Psoas muscle (tissue), 8 donors: ENCODE measurements at regions of chr22 and their contacts with region 1.

Region 1: GRCh38 chr22:28442264-28442710 is 237.4 kb downstream of the TTC28 start:
- DNase-seq: peak; percentile 74 to 87
- ATAC-seq: peak; percentile 90 to 93 (median 92)
- H3K4me3 ChIP-seq: peak overlapping the region; percentile 79
- H3K27ac ChIP-seq: peak overlapping the region; percentile 79
- H3K4me1 ChIP-seq: peaks cover 61% of the 10 kb centered on the region
- H3K27me3 ChIP-seq: no peaks in the 10 kb centered on the region
- CTCF ChIP-seq: peak; percentile 67

Region 2: GRCh38 chr22:28019881-28020871 is 422.1 kb before region 1 on chr22:
- intact Hi-C with region 1: loop called (anchors 5 kb)
- DNase-seq: peak; percentile 82 to 90
- ATAC-seq: peak; percentile 71 to 82 (median 73)
- H3K4me3 ChIP-seq: no peak overlapping the region
- H3K27ac ChIP-seq: peak overlapping the region; percentile 91
- H3K4me1 ChIP-seq: peaks cover 48% of the 10 kb centered on the region
- H3K27me3 ChIP-seq: no peaks in the 10 kb centered on the region
- CTCF ChIP-seq: peak; percentile 97

Region 3: DNA sequence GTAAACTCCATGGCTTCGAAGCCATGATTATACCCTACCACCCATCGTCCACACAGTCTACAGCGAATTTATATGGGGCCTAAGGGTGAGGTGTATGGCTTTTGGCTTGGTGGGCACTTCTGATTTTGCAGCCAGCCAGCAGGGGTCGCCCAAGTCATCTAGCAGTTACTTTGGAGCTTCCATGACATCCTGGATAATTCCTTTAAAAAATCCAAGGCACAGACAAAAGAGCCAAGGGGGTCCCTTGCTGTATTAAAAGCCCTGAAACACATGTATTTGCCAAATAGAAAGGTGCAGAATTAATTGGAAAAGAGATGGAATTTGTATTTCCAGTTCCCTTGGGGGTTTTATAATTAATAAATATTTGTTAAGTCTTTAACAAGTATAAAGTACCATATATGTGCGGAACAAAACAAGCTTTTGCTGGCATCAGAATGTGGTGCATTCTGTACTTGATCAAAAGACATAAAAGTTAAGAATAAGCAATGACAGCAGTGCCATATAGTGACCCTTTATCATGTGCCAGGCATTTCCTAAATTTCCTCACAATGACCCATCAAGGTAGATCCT is 390.4 kb before region 1 on chr22:
- intact Hi-C with region 1: loop called (anchors 5 to 10 kb)
- DNase-seq: peak; percentile 72 to 88
- ATAC-seq: peak; percentile 67 to 84 (median 76)
- H3K4me3 ChIP-seq: no peak overlapping the region
- H3K27ac ChIP-seq: no peak overlapping the region
- H3K4me1 ChIP-seq: no peaks in the 10 kb centered on the region
- H3K27me3 ChIP-seq: no peaks in the 10 kb centered on the region
- CTCF ChIP-seq: peak; percentile 92

Region 4: DNA sequence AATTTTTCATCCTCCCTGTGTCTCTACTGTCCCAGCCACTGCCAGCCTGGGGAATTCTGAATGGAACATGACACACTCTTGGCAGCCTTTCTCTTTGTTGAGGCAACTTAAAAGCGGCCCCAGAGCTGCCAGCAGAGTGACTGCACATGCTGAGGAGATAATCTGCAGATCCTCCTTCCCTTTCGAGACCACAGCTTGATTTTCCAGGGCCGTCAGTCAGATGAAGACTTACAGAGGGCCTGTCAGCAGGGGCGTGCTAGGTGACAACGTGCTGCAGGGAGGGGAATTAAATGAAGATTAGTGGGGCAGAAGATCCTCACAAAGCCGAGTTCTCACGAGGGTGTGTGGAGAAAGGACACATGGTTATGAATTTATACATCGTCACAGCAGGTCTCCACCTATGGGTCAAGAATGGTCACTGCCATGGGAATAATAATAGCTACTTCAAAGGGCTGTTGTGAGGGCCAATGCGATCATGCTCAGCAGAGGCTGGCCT is 329.7 kb before region 1 on chr22:
- intact Hi-C with region 1: loop called in 1 of 2 experiments (anchors 10 kb)
- DNase-seq: peak; percentile 59 to 80
- ATAC-seq: peak; percentile 77 to 95 (median 88)
- H3K4me3 ChIP-seq: peak overlapping the region; percentile 27
- H3K27ac ChIP-seq: peak overlapping the region; percentile 62
- H3K4me1 ChIP-seq: peaks cover 18% of the 10 kb centered on the region
- H3K27me3 ChIP-seq: no peaks in the 10 kb centered on the region
- CTCF ChIP-seq: peak; percentile 55

Region 5: DNA sequence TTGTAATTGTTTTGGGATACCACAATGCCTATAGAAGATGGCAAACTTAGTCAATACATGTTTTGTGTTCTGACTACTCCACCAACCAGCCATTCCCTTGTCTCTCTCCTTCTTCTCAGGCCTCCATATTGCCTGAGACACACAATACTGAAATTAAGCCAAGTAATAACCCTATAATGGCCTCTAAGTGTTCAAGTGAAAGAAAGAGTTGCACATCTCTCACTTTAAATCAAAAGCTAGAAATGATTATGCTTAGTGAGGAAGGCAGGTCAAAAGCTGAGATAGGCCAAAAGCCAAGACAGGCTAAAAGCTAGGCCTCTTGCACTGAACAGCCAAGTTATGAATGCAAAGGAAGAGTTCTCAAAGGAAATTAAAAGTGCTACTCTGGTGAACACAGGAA is 81.3 kb before region 1 on chr22:
- intact Hi-C with region 1: loop called in 1 of 2 experiments (anchors 5 kb)
- DNase-seq: no peak
- ATAC-seq: no peak
- H3K4me3 ChIP-seq: no peak overlapping the region
- H3K27ac ChIP-seq: no peak overlapping the region
- H3K4me1 ChIP-seq: peaks cover 16% of the 10 kb centered on the region
- H3K27me3 ChIP-seq: no peaks in the 10 kb centered on the region
- CTCF ChIP-seq: no peak

Region 6: GRCh38 chr22:28395920-28396753 is 46.1 kb before region 1 on chr22:
- intact Hi-C with region 1: no loop called
- DNase-seq: no peak
- ATAC-seq: peak in 1 of 4 donors; percentile 25
- H3K4me3 ChIP-seq: no peak overlapping the region
- H3K27ac ChIP-seq: no peak overlapping the region
- H3K4me1 ChIP-seq: peaks cover 8% of the 10 kb centered on the region
- H3K27me3 ChIP-seq: no peaks in the 10 kb centered on the region
- CTCF ChIP-seq: no peak

Region 7: DNA sequence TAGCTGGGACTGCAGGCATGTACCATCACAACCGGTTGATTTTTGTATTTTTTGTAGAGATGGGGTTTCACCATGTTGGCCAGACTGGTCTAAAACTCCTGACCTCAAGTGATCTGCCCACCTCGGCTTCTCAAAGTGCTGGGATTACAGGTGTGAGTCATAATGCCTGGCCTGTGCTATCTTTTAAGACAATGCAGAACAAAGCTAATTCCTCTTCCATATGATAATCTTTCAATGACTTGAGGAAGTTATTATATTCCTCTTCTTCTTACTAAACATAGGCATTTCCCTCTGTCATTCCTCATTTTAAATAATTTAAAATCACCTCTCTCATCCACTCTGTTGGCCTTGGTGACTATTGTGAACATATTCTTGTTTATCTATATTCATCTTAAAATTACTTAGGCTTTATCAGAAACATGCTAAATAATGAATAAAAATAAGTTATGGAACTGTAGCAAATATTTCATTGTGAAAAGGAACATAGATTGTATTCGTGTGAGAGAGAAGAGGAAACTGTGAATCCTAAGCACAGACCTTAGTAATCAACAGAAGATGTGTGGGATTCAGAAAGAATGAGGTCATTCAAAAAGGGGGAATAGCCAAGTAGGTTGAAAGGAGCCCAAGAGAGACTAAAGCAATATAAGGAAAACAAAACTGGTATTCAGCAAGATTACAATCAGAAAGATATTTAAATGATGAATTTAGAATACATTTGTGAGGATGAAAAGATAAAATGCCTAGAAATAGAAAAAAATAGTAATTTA is 32.1 kb before region 1 on chr22:
- intact Hi-C with region 1: no loop called
- DNase-seq: no peak
- ATAC-seq: no peak
- H3K4me3 ChIP-seq: no peak overlapping the region
- H3K27ac ChIP-seq: no peak overlapping the region
- H3K4me1 ChIP-seq: peaks cover 39% of the 10 kb centered on the region
- H3K27me3 ChIP-seq: no peaks in the 10 kb centered on the region
- CTCF ChIP-seq: no peak

Region 8: DNA sequence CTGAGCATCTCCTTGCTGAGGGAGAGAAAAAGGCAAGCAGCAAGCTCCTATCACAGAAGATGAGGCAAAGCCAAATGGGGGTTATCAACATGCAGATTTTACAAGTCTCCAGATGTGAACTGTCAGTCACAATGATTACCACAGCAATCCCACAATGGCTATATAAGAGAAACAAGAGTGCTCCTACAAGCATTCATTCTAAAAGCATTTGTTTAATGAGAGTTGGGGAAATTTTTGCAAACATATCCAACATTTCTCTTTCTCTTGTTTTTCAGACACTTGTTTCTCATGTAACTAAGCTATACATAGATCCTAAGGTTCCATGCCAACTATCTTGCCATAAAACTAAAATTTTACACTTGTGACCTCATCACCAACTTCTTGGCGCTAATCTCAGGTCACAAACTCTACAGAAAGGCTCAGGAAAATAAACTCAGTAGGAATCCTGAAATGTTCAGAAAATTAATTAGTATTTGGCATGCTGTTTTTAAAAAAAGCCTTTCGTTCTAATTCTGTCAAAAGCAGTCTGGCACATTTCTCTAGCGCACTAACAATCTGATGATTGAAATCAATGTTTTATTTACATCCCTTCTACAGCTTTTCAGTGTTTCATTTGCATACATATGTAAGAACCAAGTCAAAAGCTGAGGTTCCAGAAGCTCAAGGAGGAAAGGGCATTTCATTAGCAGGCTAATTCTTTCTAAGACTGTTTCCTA is 37.9 kb after region 1 on chr22:
- intact Hi-C with region 1: no loop called
- DNase-seq: no peak
- ATAC-seq: no peak
- H3K4me3 ChIP-seq: no peak overlapping the region
- H3K27ac ChIP-seq: no peak overlapping the region
- H3K4me1 ChIP-seq: no peaks in the 10 kb centered on the region
- H3K27me3 ChIP-seq: peaks cover 0 to 1% (median 0%) of the 10 kb centered on the region in 3 donors
- CTCF ChIP-seq: no peak

Region 9: GRCh38 chr22:28505416-28506149 is 63.3 kb after region 1 on chr22:
- intact Hi-C with region 1: no loop called
- DNase-seq: peak in 1 of 2 donors; percentile 11
- ATAC-seq: peak in 2 of 4 donors; percentile 50 to 62
- H3K4me3 ChIP-seq: no peak overlapping the region
- H3K27ac ChIP-seq: no peak overlapping the region
- H3K4me1 ChIP-seq: no peaks in the 10 kb centered on the region
- H3K27me3 ChIP-seq: no peaks in the 10 kb centered on the region
- CTCF ChIP-seq: no peak